Endothelial cell of umbilical vein (primary cell): ENCODE measurements at regions of chr18 and their contacts with region 1.

Region 1: DNA sequence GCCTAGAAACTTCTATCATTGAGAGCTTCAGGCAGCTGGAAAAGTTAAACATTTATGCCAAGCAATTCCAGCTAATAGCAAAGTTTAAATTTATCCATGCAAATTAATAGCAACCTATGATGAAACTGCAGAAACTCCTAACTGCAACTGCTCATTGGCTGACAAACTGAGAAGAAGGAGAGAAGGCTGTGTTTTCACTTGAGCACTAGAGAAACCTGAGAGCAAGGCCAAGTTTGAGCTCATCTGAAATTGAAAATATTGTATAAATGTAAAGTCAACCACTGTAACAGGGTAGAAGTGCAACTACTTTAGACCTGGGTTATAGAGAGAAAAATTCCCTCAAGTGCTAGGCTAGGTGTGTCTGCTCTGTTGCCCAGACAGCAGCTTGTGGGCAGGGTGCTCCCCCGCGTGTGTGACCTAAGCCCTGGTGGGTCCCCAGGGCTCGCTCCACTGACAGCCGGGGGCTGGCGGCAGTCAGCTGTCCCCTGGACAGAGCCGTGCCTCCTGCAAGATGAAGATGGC is 50.2 kb downstream of the CABYR start:
- DNase-seq: no peak
- H3K4me3 ChIP-seq: no peak overlapping the region
- H3K27ac ChIP-seq: no peak overlapping the region
- H3K4me1 ChIP-seq: no peaks in the 10 kb centered on the region
- H3K27me3 ChIP-seq: no peaks in the 10 kb centered on the region
- CTCF ChIP-seq: no peak
- POLR2A ChIP-seq: no peak

Region 2: GRCh38 chr18:23563377-23564043 is 625.6 kb before region 1 on chr18:
- CTCF ChIA-PET with region 1: no interaction called
- POLR2A ChIA-PET with region 1: no interaction called
- dilution Hi-C with region 1: no loop called
- intact Hi-C with region 1: no loop called
- DNase-seq: no peak
- H3K4me3 ChIP-seq: no peak overlapping the region
- H3K27ac ChIP-seq: no peak overlapping the region
- H3K4me1 ChIP-seq: no peaks in the 10 kb centered on the region
- H3K27me3 ChIP-seq: no peaks in the 10 kb centered on the region
- CTCF ChIP-seq: no peak
- POLR2A ChIP-seq: no peak

Region 3: DNA sequence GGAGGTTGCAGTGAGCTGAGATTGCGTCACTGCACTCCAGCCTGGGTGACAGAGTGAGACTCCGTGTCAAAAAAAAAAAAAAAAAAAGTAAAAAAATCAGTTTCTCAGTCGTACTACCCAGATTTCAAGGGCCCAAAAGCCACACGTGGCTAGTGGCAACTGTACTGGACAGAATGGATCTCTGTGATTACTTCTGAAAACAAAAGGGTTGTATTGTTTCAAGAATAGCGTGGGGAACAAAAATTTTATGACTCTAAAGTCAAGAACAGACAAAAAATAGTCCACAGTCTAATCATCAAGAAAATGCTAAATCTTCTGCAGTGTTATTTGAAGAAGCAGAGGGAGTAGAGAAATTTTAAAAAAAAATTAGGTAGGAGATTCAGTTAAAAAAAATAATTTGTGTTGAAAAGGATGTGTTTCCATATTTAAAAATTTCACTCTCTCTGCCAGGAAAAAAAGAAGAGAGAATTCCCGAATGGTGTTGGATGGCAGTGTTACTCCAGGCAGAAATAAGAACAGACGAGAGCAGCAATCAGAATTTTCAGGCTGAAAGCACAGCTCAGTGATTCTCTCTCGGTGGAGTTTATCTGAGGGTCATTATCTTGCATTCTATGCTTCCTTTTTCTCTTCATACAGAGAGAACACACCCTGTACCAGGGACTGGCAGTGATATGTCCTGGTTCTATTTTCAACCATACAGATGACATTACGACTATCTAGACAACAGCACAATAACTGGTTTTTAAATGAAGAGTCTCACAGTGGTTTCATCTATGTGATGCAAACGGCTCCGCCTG is 11.6 kb after region 1 on chr18:
- CTCF ChIA-PET with region 1: interaction called, 10 read pairs
- POLR2A ChIA-PET with region 1: no interaction called
- dilution Hi-C with region 1: no loop called
- intact Hi-C with region 1: no loop called
- DNase-seq: no peak
- H3K4me3 ChIP-seq: no peak overlapping the region
- H3K27ac ChIP-seq: no peak overlapping the region
- H3K4me1 ChIP-seq: no peaks in the 10 kb centered on the region
- H3K27me3 ChIP-seq: no peaks in the 10 kb centered on the region
- CTCF ChIP-seq: no peak
- POLR2A ChIP-seq: no peak